ENCODE measurements at regions of chr1 and their contacts with region 1.

Region 1: GRCh38 chr1:204207136-204207616 is 6.6 kb downstream of the GOLT1A start:
- H3K4me3 ChIP-seq: no peak overlapping the region
- H3K27ac ChIP-seq: no peak overlapping the region
- H3K4me1 ChIP-seq: no peaks in the 10 kb centered on the region
- CTCF ChIP-seq: peak; percentile 85

Region 2: GRCh38 chr1:204145033-204145504 is 62.1 kb before region 1 on chr1:
- CTCF ChIA-PET with region 1: interaction called, 11 read pairs
- POLR2A ChIA-PET with region 1: no interaction called
- H3K4me3 ChIP-seq: no peak overlapping the region
- H3K27ac ChIP-seq: no peak overlapping the region
- H3K4me1 ChIP-seq: no peaks in the 10 kb centered on the region
- CTCF ChIP-seq: no peak

Region 3: DNA sequence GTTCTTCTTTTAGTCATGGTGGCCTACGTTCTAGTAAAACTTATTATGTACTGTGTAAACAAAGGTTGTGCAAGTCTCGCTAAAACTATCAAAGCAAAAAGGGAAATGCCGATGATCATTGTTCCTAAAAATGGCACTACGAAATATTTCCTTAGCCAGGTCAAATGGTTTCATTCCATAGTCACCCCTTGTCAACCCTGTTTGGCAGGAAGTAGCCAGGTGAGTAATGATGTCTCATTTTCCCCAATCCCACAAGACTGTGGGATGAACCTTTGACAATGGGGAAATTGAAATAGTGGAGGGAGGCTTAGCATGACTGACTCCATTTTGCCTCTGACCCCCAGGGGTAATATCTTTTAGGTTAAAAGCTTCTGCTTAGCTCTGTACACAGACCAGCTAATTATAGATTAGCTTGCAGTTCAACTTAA is 35.4 kb before region 1 on chr1:
- CTCF ChIA-PET with region 1: interaction called, 18 read pairs
- POLR2A ChIA-PET with region 1: no interaction called
- H3K4me3 ChIP-seq: no peak overlapping the region
- H3K27ac ChIP-seq: no peak overlapping the region
- H3K4me1 ChIP-seq: no peaks in the 10 kb centered on the region
- CTCF ChIP-seq: no peak

Region 4: DNA sequence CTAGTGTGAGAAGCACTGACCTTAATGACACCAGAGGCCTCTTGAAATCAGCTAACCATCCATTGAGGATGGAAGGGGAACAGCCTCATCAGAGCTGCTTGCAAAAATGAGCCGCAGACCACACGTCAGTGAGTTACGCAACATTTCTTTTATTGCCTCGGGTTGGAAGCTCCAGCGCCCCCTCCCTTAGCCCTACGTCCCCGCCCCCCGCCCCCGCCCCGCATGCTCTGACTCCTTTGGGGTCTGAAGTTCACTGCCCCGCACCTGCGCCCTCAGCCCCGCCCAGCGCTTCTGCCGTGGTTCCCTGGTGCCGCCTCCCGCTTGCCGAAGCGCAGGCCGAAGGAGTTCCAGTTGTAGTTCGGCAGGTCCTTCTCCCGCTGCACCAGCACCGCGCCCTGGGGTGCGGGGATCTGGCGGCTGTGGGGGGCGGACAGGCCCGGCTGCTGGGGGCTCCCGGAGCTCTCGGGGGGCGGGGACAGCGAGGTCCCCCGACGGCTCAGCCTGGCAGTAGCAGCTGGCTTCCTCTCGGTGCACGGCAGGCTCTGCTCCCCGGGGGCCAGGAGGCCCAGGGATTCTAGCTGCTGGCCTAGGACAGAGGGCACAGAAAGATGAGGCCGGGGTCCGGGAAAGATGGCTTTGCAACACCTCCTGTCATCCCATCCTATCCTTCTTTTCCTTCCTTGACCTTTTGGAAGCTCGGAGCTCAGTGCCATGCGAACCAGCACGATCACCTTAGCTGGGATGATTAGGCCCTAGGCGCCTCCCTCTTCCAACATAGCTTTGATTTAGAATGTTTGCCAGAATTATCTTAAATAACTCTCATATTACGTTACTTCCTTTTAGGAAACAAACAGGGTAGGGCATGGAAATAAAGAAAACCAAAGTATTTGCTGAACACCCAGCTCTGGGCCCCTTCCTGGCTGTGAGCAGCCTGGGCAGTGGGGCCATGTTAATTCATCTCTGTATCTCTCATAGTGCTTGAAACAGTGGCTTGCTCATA is 16.7 kb before region 1 on chr1:
- CTCF ChIA-PET with region 1: interaction called, 15 read pairs
- POLR2A ChIA-PET with region 1: no interaction called
- H3K4me3 ChIP-seq: no peak overlapping the region
- H3K27ac ChIP-seq: no peak overlapping the region
- H3K4me1 ChIP-seq: no peaks in the 10 kb centered on the region
- CTCF ChIP-seq: no peak

Region 5: GRCh38 chr1:204257954-204258752 is 51.0 kb after region 1 on chr1:
- CTCF ChIA-PET with region 1: interaction called, 12 read pairs
- POLR2A ChIA-PET with region 1: no interaction called
- H3K4me3 ChIP-seq: no peak overlapping the region
- H3K27ac ChIP-seq: no peak overlapping the region
- H3K4me1 ChIP-seq: peaks cover 8% of the 10 kb centered on the region; the same call in 1 of the 2 replicates
- CTCF ChIP-seq: peak; percentile 73

Region 6: DNA sequence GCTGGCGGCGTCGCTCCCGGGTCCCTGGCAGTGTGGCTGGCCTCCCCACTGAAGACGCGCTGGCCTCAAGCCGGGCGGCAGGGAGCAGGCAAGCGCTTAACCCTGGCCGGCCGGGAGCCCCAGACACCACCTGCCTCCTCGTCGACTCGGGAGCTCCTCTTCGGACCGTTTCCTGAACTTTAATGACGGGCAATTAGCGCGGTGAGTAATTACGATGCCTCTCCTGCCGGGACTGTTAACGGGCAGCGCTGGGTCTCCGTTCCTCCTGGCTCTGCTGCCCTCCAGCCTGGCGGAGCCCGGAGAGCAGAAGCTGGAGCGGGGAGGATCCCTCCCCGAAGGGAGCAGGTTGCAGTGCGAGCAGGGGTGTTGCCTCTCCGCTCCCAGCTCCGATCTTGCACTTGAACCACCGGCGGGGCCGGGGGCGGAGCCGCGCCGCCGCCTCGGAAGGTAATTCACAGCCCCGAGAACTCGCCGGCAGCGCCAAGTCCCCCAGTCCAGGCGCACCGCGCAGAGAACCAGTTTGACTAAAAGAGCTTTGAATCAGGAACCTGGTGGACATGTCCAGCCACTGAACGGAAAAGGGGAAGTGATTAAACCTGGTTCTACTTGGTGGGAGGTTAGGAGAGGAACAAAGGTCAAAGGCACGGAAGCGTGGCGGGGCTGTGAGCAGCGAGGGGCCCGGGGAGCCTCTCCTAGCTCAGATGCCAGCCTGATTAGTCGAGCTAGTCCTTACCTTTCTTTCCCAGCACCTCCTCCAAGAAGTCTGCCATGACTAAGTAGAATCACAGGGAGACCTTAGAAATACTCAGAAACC is 170.8 kb after region 1 on chr1:
- CTCF ChIA-PET with region 1: interaction called, 10 read pairs
- POLR2A ChIA-PET with region 1: no interaction called
- H3K4me3 ChIP-seq: peak overlapping the region; percentile 26
- H3K27ac ChIP-seq: no peak overlapping the region; the same call in 1 of the 2 replicates
- H3K4me1 ChIP-seq: no peaks in the 10 kb centered on the region
- CTCF ChIP-seq: no peak

Region 7: GRCh38 chr1:204587621-204588020 is 380.4 kb after region 1 on chr1:
- CTCF ChIA-PET with region 1: no interaction called
- POLR2A ChIA-PET with region 1: no interaction called
- H3K4me3 ChIP-seq: no peak overlapping the region
- H3K27ac ChIP-seq: no peak overlapping the region
- H3K4me1 ChIP-seq: no peaks in the 10 kb centered on the region
- CTCF ChIP-seq: no peak